Activated B cell treated with CpG ODN at 0.5 μM for 24 hours (primary cell): ENCODE measurements at regions of chr9 and their contacts with region 1.

Region 1: GRCh38 chr9:122453677-122454135 is 24.0 kb downstream of the OR1J1 start:
- DNase-seq: no peak
- ATAC-seq: no peak
- H3K4me3 Mint-ChIP-seq: no peak overlapping the region
- H3K27ac Mint-ChIP-seq: no peak overlapping the region
- H3K4me1 Mint-ChIP-seq: no peaks in the 10 kb centered on the region
- H3K27me3 Mint-ChIP-seq: peaks cover 22% of the 10 kb centered on the region
- CTCF ChIP-seq: no peak

Region 2: GRCh38 chr9:122377241-122378164 is 76.2 kb before region 1 on chr9:
- CTCF ChIA-PET with region 1: interaction called, 4 read pairs
- POLR2A ChIA-PET with region 1: no interaction called
- intact Hi-C with region 1: loop called (anchors 2 kb)
- DNase-seq: no peak
- ATAC-seq: peak; percentile 49
- H3K4me3 Mint-ChIP-seq: no peak overlapping the region
- H3K27ac Mint-ChIP-seq: no peak overlapping the region
- H3K4me1 Mint-ChIP-seq: peaks cover 38% of the 10 kb centered on the region
- H3K27me3 Mint-ChIP-seq: no peaks in the 10 kb centered on the region
- CTCF ChIP-seq: no peak